ENCODE measurements at regions of chr5 and their contacts with region 1.

Region 1: GRCh38 chr5:33235824-33236223 is 204.9 kb upstream of the TARS1 start:
- DNase-seq: peak; percentile 70
- H3K4me3 Mint-ChIP-seq: peak overlapping the region; percentile 43
- H3K27ac Mint-ChIP-seq: peak overlapping the region; percentile 23
- H3K4me1 Mint-ChIP-seq: peaks cover 21% of the 10 kb centered on the region
- H3K27me3 Mint-ChIP-seq: no peaks in the 10 kb centered on the region

Region 2: DNA sequence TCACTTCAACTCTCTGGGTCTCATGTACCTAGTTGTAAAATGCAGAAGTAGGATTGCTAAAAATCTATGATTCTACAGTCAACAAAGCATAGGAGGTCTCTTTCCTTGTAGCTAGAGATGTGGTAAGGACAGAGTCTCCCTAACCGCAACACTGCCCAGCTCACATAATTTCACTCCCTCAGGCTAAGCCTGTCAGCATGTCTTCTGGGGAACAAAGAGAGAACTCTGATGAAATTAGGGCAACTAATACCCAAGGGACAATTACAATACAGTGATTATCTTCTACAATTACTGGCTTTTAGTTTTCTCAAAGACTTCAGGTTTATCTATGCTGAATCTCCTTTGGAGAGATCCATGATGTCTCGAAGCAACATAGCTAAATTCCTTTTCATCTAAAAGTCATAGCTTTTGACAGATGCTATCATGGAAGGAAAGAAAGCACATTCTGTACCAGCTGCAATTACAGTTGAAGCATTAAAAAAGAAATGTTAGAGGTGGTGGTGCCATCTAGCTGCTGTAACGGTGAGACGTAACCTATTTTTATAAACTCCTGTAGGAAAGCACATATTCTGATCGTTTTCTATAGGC is 63.9 kb after region 1 on chr5:
- intact Hi-C with region 1: loop called (anchors 2 kb)
- DNase-seq: peak; percentile 57
- H3K4me3 Mint-ChIP-seq: no peak overlapping the region
- H3K27ac Mint-ChIP-seq: no peak overlapping the region
- H3K4me1 Mint-ChIP-seq: peaks cover 7% of the 10 kb centered on the region
- H3K27me3 Mint-ChIP-seq: peaks cover 10% of the 10 kb centered on the region

Region 3: GRCh38 chr5:33507426-33507825 is 271.6 kb after region 1 on chr5:
- intact Hi-C with region 1: no loop called
- DNase-seq: no peak
- H3K4me3 Mint-ChIP-seq: no peak overlapping the region
- H3K27ac Mint-ChIP-seq: no peak overlapping the region
- H3K4me1 Mint-ChIP-seq: no peaks in the 10 kb centered on the region
- H3K27me3 Mint-ChIP-seq: no peaks in the 10 kb centered on the region